ENCODE measurements at regions of chr12 and their contacts with region 1.

Region 1: GRCh38 chr12:57609781-57610553 is 1.3 kb upstream of the ARHGEF25 start:
- DNase-seq: no peak
- ATAC-seq: no peak
- H3K4me3 ChIP-seq: no peak overlapping the region
- H3K27ac ChIP-seq: no peak overlapping the region
- H3K4me1 ChIP-seq: peaks cover 6% of the 10 kb centered on the region
- H3K27me3 ChIP-seq: no peaks in the 10 kb centered on the region
- CTCF ChIP-seq: no peak
- POLR2A ChIP-seq: no peak
- RAD21 ChIP-seq: no peak

Region 2: DNA sequence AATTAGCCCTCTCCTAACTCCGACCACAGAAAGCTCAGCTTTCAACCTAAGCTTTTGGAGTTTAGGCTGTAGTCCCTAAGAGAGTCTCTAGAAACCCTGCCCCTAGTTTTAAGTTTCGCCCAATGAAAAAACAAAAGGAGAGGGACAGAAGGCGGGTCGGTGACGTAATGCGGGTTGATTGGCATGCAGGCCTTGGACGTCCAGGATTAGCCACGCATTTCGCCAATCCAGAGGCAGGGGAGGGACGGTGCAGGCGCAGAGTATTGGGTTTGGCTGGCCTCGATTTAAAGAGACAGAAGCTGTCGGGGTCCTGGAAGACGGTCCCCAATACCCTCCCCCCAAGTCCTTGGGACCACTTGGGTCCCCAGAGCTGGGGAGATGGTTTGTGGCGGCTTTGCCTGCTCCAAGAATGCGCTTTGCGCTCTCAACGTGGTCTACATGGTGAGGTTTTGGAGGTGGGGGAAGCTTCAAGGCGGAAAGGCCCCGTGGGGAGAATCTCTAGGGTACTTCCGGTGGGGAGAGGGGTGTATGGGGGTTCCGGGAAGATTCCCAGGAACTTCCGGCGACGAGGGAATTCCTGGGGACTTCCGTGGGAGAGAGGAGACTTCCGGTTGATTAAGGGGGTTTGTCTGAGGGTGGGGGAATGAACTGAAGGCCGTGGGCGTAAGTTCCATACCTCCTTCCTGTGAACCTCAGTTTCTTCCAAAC is 135.0 kb after region 1 on chr12 and contains the start of gene TSPAN31:
- CTCF ChIA-PET with region 1: no interaction called
- POLR2A ChIA-PET with region 1: interaction called, 15 read pairs
- dilution Hi-C with region 1: no loop called
- in situ Hi-C with region 1: no loop called
- intact Hi-C with region 1: no loop called
- DNase-seq: peak; percentile 99
- ATAC-seq: peak; percentile 95
- H3K4me3 ChIP-seq: peak within 1 kb of the TSS; percentile 69
- H3K27ac ChIP-seq: peak within 1 kb of the TSS; percentile 93
- H3K4me1 ChIP-seq: peaks cover 3% of the 10 kb centered on the region
- H3K27me3 ChIP-seq: peaks cover 22% of the 10 kb centered on the region
- CTCF ChIP-seq: no peak
- POLR2A ChIP-seq: peak; percentile 81; the same call in 1 of the 2 replicates
- RAD21 ChIP-seq: no peak
- total RNA-seq, gene TSPAN31: 51.1 and 71.2 TPM in 2 replicates

Measured in IMR-90 (cell line).